ENCODE measurements at regions of chr17 and their contacts with region 1.

Region 1: DNA sequence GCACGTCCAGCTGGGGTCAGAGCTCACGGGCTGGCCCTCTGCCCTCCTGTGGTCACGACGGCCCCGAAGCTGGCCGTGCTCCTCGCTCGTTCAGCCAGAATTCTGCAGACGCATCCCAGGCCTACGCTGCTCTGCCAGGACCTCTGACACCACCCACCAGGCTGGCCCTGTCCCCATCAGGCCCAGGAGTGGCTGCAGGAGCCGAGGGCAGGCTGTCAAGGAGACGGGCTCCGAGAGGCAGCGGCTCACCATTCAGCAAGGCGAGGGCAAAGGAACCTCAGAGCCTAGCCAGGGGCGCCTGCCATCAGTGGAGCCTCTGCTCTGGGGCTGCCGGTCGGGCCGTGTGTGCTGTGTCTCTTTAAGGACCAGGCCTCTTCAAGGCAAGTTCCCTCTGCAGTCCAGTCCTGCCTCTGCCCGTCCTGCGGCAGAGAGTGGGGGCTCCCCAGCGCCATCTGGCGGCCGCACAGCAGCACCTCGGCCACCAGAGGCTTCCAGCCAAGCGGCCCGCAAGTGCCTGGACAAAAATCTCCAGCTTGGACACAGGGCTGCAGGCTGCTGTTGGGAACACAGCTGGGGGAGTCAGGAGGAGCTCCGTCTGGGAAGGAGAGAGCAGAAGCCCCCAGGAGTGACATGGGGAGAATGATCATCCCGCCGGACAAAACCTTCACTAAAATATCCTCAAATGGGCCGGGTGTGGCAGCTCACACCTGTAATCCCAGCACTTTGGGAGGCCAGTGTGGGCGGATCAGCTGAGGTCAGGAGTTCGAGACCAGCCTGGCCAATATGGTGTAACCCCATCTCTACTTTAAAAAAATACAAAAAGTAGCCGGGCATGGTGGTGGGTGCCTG is 7.4 kb upstream of the ABR start:
- DNase-seq: peak; percentile 82
- ATAC-seq: peak; percentile 72
- H3K4me3 ChIP-seq: no peak overlapping the region
- H3K4me3 Mint-ChIP-seq: peak overlapping the region; percentile 59
- H3K27ac ChIP-seq: no peak overlapping the region
- H3K27ac Mint-ChIP-seq: peak overlapping the region; percentile 21
- H3K4me1 ChIP-seq: peaks cover 42 to 49% of the 10 kb centered on the region in 2 donors
- H3K4me1 Mint-ChIP-seq: peaks cover 54% of the 10 kb centered on the region
- H3K27me3 ChIP-seq: peaks cover 0 to under 1% (median 0%) of the 10 kb centered on the region in 4 experiments
- H3K27me3 Mint-ChIP-seq: no peaks in the 10 kb centered on the region
- CTCF ChIP-seq: peak; percentile 97

Region 2: DNA sequence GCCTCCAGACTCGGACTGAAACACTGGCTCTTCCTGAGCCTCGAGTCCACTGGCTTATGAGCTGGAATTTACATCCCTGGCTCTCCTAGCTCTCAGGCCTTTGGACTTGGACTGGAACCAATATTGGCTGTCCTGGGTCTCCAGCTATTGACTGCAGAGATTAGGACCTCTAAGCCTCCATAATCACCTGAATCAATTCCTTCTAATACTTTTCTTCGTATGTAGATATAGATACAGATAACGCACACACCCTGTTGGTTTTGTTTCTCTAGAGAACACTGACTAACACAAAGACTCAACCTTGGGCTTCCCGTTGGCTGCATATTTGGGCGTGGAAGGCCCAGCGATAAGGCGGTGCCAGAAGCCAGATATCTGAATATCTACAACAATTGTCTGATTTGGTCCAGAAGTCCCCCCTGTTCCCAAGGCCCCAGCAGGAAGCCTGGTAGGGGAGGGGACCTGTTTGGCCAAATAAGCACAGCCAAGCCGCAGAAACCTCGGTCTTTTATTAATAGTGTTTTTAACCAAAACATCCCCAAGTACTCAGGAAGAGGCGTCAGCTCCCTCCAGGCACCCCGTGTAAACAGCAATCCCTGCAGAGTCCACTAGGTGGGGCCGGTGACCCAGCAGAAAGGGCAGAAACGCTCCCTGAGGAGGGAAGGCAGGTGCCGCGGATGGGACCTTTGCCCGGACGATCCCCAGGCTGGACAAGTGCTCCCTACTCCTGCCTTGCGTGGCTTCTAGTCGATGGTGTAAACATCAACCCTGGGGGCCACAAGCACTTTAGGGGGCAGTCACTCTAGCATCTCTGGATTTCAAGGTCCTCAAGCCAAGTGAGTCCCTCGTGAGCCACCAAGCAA is 64.4 kb before region 1 on chr17:
- CTCF ChIA-PET with region 1: interaction called, 138 read pairs
- POLR2A ChIA-PET with region 1: no interaction called
- intact Hi-C with region 1: loop called (anchors 2 kb)
- DNase-seq: peak; percentile 85
- ATAC-seq: peak; percentile 95
- H3K4me3 ChIP-seq: no peak overlapping the region
- H3K4me3 Mint-ChIP-seq: no peak overlapping the region
- H3K27ac ChIP-seq: no peak overlapping the region
- H3K27ac Mint-ChIP-seq: no peak overlapping the region
- H3K4me1 ChIP-seq: peaks cover 12% of the 10 kb centered on the region in 2 donors
- H3K4me1 Mint-ChIP-seq: peaks cover 15% of the 10 kb centered on the region
- H3K27me3 ChIP-seq: no peaks in the 10 kb centered on the region
- H3K27me3 Mint-ChIP-seq: no peaks in the 10 kb centered on the region
- CTCF ChIP-seq: peak; percentile 92

Region 3: GRCh38 chr17:1244606-1245012 is 57.5 kb after region 1 on chr17:
- CTCF ChIA-PET with region 1: no interaction called
- POLR2A ChIA-PET with region 1: no interaction called
- intact Hi-C with region 1: no loop called
- DNase-seq: no peak
- ATAC-seq: no peak
- H3K4me3 ChIP-seq: no peak overlapping the region
- H3K4me3 Mint-ChIP-seq: no peak overlapping the region
- H3K27ac ChIP-seq: no peak overlapping the region
- H3K27ac Mint-ChIP-seq: no peak overlapping the region
- H3K4me1 ChIP-seq: no peaks in the 10 kb centered on the region
- H3K4me1 Mint-ChIP-seq: no peaks in the 10 kb centered on the region
- H3K27me3 ChIP-seq: peaks cover 0 to 2% (median 0%) of the 10 kb centered on the region in 4 experiments
- H3K27me3 Mint-ChIP-seq: peaks cover 8% of the 10 kb centered on the region
- CTCF ChIP-seq: no peak

Region 4: DNA sequence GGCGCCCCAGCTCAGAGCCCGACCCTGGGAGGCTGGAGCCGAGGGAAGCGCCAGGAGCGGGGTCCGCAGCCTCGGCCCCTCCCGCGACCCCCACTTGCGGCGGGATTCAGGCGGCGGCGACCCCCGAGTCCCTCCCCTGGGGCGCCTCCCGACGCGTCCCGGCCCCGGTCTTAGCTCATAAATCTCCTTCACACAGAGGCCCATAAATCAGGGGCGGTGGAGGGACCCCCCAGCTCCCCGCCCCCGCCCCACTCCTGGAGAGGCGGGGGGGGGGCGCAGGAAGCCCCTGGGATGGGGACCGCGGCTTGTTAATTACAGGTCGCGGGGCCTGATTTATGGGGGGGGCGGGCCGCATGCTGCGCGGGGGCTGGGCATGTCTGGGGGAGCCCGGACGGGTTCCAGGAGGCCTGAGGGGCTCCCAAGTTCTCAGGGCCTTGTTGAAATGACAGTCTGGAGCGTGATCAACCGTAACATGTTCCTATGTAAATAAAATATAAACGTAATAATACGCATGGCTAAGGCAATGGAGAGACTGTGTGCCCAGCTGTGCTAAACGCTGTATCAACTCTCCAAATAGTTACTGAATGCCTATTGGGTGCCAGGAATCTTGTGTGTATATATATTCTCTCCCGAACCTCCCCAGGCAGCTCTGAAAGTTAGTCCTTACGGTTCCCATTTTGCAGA is 73.1 kb after region 1 on chr17:
- CTCF ChIA-PET with region 1: interaction called, 12 read pairs
- POLR2A ChIA-PET with region 1: no interaction called
- intact Hi-C with region 1: no loop called
- DNase-seq: no peak
- ATAC-seq: no peak
- H3K4me3 ChIP-seq: peak overlapping the region in 4 of 5 experiments; percentile 32 to 67 (median 47)
- H3K4me3 Mint-ChIP-seq: peak overlapping the region; percentile 63
- H3K27ac ChIP-seq: no peak overlapping the region
- H3K27ac Mint-ChIP-seq: no peak overlapping the region
- H3K4me1 ChIP-seq: peaks cover 3 to 13% of the 10 kb centered on the region in 2 donors
- H3K4me1 Mint-ChIP-seq: peaks cover 12% of the 10 kb centered on the region
- H3K27me3 ChIP-seq: peaks cover 0 to 45% (median 16%) of the 10 kb centered on the region in 4 experiments
- H3K27me3 Mint-ChIP-seq: peaks cover 26% of the 10 kb centered on the region
- CTCF ChIP-seq: no peak

Region 5: DNA sequence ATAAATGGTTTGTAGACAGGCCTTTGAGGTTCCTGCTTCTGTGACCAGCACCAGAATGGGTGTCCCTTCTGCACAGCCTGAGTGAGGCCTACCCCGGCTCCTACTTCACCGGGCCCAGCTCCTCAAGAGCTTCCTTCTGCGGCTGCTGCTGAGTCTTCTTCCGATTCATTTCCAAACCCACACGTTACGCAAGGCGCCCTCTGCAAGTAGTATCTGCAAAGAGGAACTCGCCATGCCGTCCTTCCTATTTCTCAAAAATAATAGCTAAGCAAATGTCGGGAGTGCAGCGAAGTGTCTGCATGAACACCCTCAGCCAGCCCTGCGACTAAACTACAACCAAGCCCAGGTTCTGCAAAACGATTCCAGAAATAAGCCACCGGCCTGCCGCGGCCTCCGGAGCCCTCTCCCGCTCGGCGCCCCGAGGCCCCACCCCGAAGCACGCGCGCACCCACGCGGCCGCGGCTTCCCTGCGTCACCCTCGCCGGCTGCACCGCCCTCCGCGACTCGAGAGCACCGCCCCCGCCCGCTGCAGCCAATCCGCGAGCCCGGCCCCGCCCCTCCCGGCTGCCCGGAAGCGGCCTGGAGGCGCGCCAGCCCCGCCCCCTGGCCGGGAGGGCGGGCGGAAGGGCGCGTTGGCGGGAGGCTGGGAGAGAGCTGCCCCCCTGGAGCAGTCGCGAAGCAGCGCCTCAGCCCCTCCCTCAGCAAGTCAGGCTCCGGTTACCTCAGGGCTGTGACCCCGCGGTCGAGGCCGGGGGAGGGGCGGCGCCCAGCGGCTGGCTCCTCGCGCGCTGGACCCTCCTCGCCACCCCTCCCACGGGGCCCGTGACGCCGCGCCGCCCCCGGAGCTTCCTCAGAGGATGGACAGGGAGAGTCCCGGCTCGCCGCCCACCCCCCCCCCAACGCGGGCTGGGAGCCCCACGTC is 1205.4 kb after region 1 on chr17:
- CTCF ChIA-PET with region 1: no interaction called
- POLR2A ChIA-PET with region 1: no interaction called
- intact Hi-C with region 1: loop called (anchors 5 kb)
- DNase-seq: peak; percentile 98
- ATAC-seq: peak; percentile 70
- H3K4me3 ChIP-seq: peak overlapping the region; percentile 35 to 98 (median 85)
- H3K4me3 Mint-ChIP-seq: peak overlapping the region; percentile 97
- H3K27ac ChIP-seq: peak overlapping the region; percentile 97 to 99
- H3K27ac Mint-ChIP-seq: peak overlapping the region; percentile 96
- H3K4me1 ChIP-seq: peaks cover 44 to 58% of the 10 kb centered on the region in 2 donors
- H3K4me1 Mint-ChIP-seq: peaks cover 58% of the 10 kb centered on the region
- H3K27me3 ChIP-seq: no peaks in the 10 kb centered on the region
- H3K27me3 Mint-ChIP-seq: no peaks in the 10 kb centered on the region
- CTCF ChIP-seq: no peak

Measured in B cell (primary cell).